ENCODE measurements at regions of chr13 and their contacts with region 1.

Region 1: DNA sequence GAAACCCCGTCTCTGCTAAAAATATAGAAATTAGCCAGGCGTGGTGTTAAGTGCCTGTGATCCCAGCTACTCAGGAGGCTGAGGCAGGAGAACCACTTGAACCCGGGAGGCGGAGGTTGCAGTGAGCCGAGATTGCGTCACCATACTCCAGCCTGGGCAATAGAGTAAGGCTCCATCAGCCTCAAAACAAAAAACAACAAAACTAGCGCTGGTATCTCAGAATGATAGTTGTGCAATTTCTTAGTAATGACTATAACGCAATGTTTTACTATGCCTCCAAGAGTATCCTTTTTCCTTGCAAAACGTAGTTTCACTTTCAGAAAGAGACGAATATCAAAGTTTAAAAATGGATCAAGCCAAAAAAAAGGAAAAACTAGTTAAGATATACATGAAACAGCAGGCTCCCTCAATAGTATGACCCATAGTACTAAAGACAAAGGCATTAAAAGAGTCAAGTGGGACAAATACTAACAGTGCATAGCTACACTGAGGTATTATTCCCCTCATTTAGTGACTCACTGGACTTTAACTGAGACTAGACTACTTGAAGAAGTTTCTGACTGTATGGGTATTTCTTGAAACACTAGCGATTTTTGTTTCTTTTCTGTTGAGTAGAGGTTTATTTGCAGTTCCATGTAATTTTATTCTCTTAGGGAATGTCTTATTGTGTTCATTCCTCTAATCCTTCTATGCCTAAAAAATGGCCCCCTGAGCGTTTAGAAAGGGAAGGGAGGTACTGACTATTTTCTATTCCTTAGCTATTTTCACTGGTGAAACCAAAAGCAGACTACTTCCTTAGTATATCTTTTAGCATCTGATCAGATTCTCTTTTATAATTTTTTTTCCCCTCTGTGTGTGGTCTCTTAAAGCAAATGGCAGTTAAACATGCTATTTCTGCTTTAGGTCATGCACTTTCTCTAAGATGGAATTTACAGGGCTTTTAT is 10.4 kb upstream of the ITM2B start:
- DNase-seq: peak in 1 of 9 experiments; percentile 27
- ATAC-seq: peak; percentile 35
- H3K4me3 ChIP-seq: peak overlapping the region in 1 of 2 experiments; percentile 42
- H3K4me3 Mint-ChIP-seq: peak overlapping the region; percentile 73
- H3K27ac ChIP-seq: peak overlapping the region; percentile 29 to 86
- H3K27ac Mint-ChIP-seq: peak overlapping the region; percentile 91
- H3K4me1 ChIP-seq: peaks cover 54% of the 10 kb centered on the region
- H3K4me1 Mint-ChIP-seq: peaks cover 65% of the 10 kb centered on the region
- H3K27me3 ChIP-seq: no peaks in the 10 kb centered on the region
- H3K27me3 Mint-ChIP-seq: no peaks in the 10 kb centered on the region
- CTCF ChIP-seq: no peak

Region 2: DNA sequence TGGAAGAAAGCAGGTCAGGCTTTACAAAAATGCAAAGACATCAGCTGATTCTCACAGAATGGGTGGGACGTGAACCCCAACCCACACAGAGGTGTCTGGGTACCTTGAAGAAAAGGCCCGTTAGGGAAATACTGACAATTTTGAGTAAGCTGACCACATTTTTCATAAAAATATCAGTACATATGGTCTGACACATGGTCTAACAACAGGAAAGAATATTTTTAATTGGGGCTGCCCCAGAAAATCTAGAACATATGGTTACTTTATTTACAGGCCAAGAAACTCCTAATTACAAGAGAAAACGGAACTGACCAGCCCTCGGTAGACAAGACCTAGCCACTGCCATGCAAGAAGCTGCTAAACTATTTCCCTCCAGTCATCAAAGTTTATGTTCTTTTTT is 38.4 kb before region 1 on chr13:
- CTCF ChIA-PET with region 1: interaction called, 5 read pairs
- POLR2A ChIA-PET with region 1: interaction called, 18 read pairs
- intact Hi-C with region 1: loop called in 1 of 2 experiments (anchors 2 kb)
- DNase-seq: no peak
- ATAC-seq: no peak
- H3K4me3 ChIP-seq: peak overlapping the region in 1 of 2 experiments; percentile 5
- H3K4me3 Mint-ChIP-seq: peak overlapping the region; percentile 26
- H3K27ac ChIP-seq: peak overlapping the region in 1 of 2 experiments; percentile 79
- H3K27ac Mint-ChIP-seq: peak overlapping the region; percentile 97
- H3K4me1 ChIP-seq: peaks cover 68% of the 10 kb centered on the region
- H3K4me1 Mint-ChIP-seq: peaks cover 64% of the 10 kb centered on the region
- H3K27me3 ChIP-seq: no peaks in the 10 kb centered on the region
- H3K27me3 Mint-ChIP-seq: no peaks in the 10 kb centered on the region
- CTCF ChIP-seq: no peak

Region 3: DNA sequence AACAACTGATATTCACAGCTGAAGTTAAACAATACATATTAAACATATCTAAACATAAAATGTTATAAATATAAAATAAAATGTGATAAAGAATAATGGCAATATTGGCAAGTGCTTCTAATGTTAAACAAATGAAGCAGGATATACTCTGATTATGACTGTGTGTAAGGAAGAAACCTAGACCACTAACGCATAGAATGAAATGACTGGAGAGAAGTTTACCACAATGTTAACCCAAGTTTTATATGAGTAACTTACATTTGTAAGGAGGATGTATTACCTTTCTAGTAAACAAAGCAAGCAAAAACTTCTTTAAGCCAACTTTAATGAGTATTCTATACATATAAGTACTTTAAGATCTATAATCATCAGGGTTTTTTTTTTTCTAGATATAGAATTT is 124.0 kb after region 1 on chr13:
- CTCF ChIA-PET with region 1: no interaction called
- POLR2A ChIA-PET with region 1: no interaction called
- intact Hi-C with region 1: no loop called
- DNase-seq: no peak
- ATAC-seq: no peak
- H3K4me3 ChIP-seq: no peak overlapping the region
- H3K4me3 Mint-ChIP-seq: no peak overlapping the region
- H3K27ac ChIP-seq: no peak overlapping the region
- H3K27ac Mint-ChIP-seq: no peak overlapping the region
- H3K4me1 ChIP-seq: no peaks in the 10 kb centered on the region
- H3K4me1 Mint-ChIP-seq: no peaks in the 10 kb centered on the region
- H3K27me3 ChIP-seq: no peaks in the 10 kb centered on the region
- H3K27me3 Mint-ChIP-seq: no peaks in the 10 kb centered on the region
- CTCF ChIP-seq: no peak